Mammary epithelial cell (primary cell): ENCODE measurements at regions of chr15 and their contacts with region 1.

Region 1: DNA sequence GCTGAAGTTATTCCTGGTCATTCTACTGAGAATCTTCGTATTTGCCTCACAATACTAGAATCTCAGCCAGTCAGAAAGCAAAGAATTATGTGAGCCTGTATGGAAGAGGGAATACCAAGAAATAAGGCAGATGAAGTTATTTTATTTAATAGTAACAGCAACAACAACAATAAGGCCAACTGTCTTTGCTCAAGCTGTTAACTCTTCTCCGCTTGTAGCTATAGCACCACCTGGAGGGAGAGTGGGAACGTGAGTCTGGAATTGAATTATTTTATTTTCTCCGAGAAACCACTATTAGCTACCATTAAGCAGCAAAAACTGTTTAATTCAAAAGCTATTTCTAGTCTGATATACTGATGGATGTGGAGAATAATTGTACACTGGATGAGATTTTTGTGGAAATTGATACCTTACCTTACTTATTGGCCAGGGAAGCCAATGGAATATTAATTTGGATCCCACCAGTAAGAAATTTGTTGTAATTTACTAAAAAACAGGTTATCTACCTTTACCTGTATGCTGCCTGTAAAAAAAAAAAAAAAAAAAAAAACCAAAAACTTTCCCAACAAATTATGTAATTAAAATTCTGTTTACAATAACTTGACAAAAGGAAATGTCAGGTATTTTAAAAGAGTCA is 50.1 kb downstream of the CALML4 start:
- DNase-seq: peak; percentile 42
- H3K4me3 ChIP-seq: no peak overlapping the region
- H3K27ac ChIP-seq: no peak overlapping the region
- H3K4me1 ChIP-seq: no peaks in the 10 kb centered on the region
- H3K27me3 ChIP-seq: no peaks in the 10 kb centered on the region
- CTCF ChIP-seq: peak; percentile 66 to 76

Region 2: GRCh38 chr15:67850995-67851571 is 304.0 kb before region 1 on chr15:
- CTCF ChIA-PET with region 1: no interaction called
- dilution Hi-C with region 1: loop called (anchors 10 kb)
- in situ Hi-C with region 1: loop called in 1 of 2 experiments (anchors 10 kb)
- intact Hi-C with region 1: no loop called
- DNase-seq: peak; percentile 75
- H3K4me3 ChIP-seq: no peak overlapping the region
- H3K27ac ChIP-seq: no peak overlapping the region
- H3K4me1 ChIP-seq: no peaks in the 10 kb centered on the region
- H3K27me3 ChIP-seq: no peaks in the 10 kb centered on the region
- CTCF ChIP-seq: no peak

Region 3: DNA sequence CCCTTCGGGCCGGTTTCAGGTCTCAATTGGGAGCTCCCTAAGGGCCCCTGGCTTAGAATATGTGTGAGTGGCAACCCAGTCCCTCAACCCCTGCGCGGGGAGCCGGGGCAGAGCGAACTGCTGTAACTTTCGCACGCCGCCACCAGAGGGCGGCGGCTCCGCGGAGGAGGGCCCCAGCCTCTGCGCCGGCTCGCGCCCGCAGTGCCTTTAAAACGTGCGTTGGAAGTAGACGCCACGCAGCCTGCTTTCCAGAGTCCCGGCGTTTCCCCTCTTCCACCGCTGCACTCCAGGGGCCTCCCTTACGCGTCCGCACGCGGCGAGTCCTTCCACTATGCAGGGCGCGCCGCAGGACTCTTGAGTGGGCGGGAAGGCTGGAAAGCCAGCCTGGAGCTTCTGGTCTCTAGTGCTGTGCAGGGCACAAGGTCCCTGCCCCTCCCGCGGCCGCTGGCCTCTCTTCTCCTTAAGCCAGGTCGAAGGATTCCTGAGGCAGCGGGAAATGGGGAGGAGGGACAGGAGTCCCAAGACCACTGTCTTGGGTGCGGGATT is 291.5 kb before region 1 on chr15:
- CTCF ChIA-PET with region 1: interaction called, 7 read pairs
- dilution Hi-C with region 1: loop called (anchors 10 kb)
- in situ Hi-C with region 1: loop called (anchors 5 to 10 kb)
- intact Hi-C with region 1: loop called (anchors 1 kb)
- DNase-seq: peak; percentile 56
- H3K4me3 ChIP-seq: peak overlapping the region; percentile 35 to 49 (median 47)
- H3K27ac ChIP-seq: no peak overlapping the region
- H3K4me1 ChIP-seq: peaks cover 9% of the 10 kb centered on the region
- H3K27me3 ChIP-seq: no peaks in the 10 kb centered on the region
- CTCF ChIP-seq: peak; percentile 68 to 96

Region 4: DNA sequence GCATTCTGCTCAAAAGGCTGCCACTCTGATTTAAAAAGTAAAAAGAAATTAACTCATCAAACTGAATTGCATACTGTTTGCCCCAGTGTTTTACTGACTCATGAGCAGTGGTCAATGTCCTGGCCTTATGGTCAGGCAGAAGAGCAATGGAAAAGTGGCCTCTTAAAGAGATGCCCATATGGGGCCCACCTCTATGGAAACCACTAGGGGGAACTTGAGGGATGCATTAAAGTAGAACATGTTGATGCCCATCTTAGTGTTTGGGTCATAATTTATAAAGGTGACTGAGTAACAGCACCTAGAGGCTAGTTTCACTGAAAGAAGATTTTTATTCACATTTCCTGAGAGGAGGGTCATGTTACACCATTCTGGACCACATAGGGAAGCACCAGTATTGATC is 248.7 kb before region 1 on chr15:
- CTCF ChIA-PET with region 1: no interaction called
- dilution Hi-C with region 1: no loop called
- in situ Hi-C with region 1: no loop called
- intact Hi-C with region 1: loop called (anchors 1 kb)
- DNase-seq: peak; percentile 12
- H3K4me3 ChIP-seq: no peak overlapping the region
- H3K27ac ChIP-seq: no peak overlapping the region
- H3K4me1 ChIP-seq: no peaks in the 10 kb centered on the region
- H3K27me3 ChIP-seq: no peaks in the 10 kb centered on the region
- CTCF ChIP-seq: peak; percentile 20 to 24

Region 5: GRCh38 chr15:68053701-68054627 is 101.1 kb before region 1 on chr15 and contains the start of gene PIAS1:
- CTCF ChIA-PET with region 1: interaction called, 5 read pairs
- dilution Hi-C with region 1: no loop called
- in situ Hi-C with region 1: no loop called
- intact Hi-C with region 1: loop called (anchors 2 kb)
- DNase-seq: peak; percentile 88
- H3K4me3 ChIP-seq: peak within 1 kb of the TSS; percentile 79 to 99 (median 87)
- H3K27ac ChIP-seq: peak within 1 kb of the TSS; percentile 73
- H3K4me1 ChIP-seq: peaks cover 6% of the 10 kb centered on the region
- H3K27me3 ChIP-seq: no peaks in the 10 kb centered on the region
- CTCF ChIP-seq: no peak
- total RNA-seq, gene PIAS1: 30.2 to 31.0 TPM

Region 6: GRCh38 chr15:68126396-68126795 is 28.6 kb before region 1 on chr15:
- CTCF ChIA-PET with region 1: no interaction called
- dilution Hi-C with region 1: no loop called
- in situ Hi-C with region 1: no loop called
- intact Hi-C with region 1: no loop called
- DNase-seq: peak; percentile 14
- H3K4me3 ChIP-seq: no peak overlapping the region
- H3K27ac ChIP-seq: no peak overlapping the region
- H3K4me1 ChIP-seq: peaks cover 13% of the 10 kb centered on the region
- H3K27me3 ChIP-seq: no peaks in the 10 kb centered on the region
- CTCF ChIP-seq: no peak

Region 7: DNA sequence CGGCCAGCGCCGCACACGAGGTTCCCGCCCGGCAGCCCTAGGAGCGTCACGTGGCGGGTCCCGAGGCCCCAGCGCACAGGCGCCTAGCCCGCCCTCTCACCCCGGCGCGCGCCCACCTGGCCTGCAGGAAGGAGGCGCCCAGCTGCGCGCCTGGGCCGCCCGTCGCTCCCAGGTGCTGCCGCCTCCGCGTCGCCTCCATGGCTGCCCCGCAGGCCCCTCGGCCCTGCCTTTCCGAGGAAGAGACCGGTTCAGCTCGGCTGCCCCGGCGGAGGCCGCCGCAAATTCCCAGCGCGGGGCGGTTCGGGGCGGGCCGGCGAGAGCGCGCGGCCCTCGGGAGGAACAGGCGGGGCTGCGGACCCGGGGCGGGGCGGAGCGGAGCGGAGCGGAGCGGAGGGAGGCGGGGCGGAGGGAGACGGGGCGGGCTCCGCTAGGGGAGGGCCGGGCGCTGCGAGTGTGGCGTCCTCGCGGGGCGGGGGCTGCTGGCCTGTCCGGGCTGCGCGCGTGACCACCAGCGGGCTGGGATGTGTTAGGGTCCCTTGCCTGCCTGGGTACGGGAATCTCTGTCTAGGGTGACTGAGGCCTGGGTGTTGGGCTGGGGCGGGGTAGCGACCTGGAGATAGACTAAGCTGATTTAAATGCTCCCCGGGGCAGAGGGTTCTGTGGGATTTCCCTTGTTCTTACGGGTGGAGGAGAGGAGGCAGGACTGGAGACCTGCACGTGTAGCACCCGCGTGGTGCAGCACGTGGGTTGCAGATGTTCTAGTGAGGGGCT is 74.5 kb after region 1 on chr15 and contains the start of gene CLN6:
- CTCF ChIA-PET with region 1: no interaction called
- dilution Hi-C with region 1: no loop called
- in situ Hi-C with region 1: no loop called
- intact Hi-C with region 1: no loop called
- DNase-seq: peak; percentile 83
- H3K4me3 ChIP-seq: peak within 1 kb of the TSS; percentile 58 to 67 (median 67)
- H3K27ac ChIP-seq: peak within 1 kb of the TSS; percentile 70
- H3K4me1 ChIP-seq: peaks cover 13% of the 10 kb centered on the region
- H3K27me3 ChIP-seq: no peaks in the 10 kb centered on the region
- CTCF ChIP-seq: no peak
- total RNA-seq, gene CLN6: 18.7 to 40.9 TPM